OCI-LY7 (cell line): ENCODE measurements at regions of chr12 and their contacts with region 1.

Region 1: DNA sequence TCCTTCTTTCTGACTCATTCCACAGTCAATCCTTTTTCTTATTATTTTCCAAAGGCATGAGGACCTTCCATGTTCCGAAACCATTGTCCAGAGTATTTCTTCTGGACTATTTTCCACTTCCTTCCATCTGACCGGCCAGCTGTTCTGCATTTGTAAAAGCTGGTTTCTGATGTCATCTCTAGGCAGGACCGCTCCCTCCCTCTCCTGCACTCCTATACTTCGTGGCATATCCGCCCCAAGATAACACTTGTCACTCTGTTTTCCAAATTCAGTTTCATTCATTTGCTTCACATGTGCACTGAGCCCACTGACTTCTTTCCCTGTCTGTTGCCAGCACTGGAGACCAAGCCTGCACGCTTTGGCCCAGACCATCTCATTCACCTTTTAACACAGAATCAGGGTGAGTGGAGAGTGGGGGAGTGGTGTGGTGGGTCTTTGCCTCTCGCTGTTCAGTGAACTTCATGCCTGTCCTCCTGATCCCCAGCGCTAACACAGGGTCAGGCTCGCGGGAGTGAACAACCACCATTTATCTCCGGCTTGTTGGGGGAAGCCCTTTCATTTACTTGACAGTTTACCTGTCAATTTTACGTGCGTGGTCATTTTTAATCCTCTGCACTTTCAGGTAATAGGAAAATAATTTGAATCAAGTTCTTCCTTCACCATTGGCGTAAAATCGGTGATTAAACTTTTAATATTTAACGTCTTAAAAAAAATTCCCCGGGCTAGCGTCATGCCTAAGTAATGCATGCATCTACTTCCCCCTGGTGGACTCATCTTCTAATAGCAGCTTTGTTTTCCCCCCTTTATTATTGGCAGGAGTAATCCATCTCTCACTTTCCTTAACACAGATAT is 52.5 kb downstream of the C12orf75 start:
- DNase-seq: peak; percentile 75
- H3K4me3 ChIP-seq: no peak overlapping the region
- H3K27ac ChIP-seq: no peak overlapping the region
- H3K4me1 ChIP-seq: peaks cover 9% of the 10 kb centered on the region
- CTCF ChIP-seq: peak; percentile 97

Region 2: DNA sequence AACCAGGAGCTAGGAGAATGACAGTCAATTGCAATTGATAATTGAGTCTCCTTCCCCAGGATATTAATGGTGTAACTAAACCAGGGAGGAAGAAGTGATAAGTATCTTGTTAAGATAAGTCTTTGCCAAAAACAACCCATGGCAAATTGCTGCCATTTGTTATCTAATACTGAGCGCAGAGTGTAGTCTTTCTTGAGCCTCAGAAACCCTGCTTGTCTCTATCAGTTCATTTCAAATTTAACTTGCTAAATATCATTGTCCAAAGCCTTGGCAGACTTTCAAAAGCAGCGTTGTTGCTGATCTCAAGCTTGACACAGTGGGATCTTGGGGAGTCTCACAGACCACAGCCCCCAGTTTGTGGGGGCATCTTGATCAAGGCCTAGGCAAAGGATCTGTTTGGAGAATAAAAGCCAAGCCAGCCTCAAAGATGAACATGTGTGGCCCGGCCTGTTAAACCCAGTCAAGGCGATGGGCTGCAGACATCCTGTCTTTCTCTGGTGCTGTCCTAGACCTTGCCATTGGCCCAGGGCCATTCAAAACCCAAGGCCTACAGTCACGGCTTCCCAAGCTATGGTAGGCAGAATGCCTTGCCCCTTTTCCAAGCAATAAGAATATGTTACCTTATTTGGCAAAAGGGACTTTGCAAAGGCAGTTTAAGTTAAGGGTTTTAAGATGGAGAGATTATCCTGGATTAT is 762.0 kb before region 1 on chr12:
- CTCF ChIA-PET with region 1: no interaction called
- POLR2A ChIA-PET with region 1: no interaction called
- intact Hi-C with region 1: no loop called
- DNase-seq: no peak
- H3K4me3 ChIP-seq: no peak overlapping the region
- H3K27ac ChIP-seq: no peak overlapping the region
- H3K4me1 ChIP-seq: peaks cover 16% of the 10 kb centered on the region
- CTCF ChIP-seq: no peak

Region 3: GRCh38 chr12:105171691-105172436 is 211.1 kb before region 1 on chr12:
- CTCF ChIA-PET with region 1: no interaction called
- POLR2A ChIA-PET with region 1: no interaction called
- intact Hi-C with region 1: loop called (anchors 5 kb)
- DNase-seq: no peak
- H3K4me3 ChIP-seq: no peak overlapping the region
- H3K27ac ChIP-seq: no peak overlapping the region
- H3K4me1 ChIP-seq: no peaks in the 10 kb centered on the region
- CTCF ChIP-seq: no peak

Region 4: DNA sequence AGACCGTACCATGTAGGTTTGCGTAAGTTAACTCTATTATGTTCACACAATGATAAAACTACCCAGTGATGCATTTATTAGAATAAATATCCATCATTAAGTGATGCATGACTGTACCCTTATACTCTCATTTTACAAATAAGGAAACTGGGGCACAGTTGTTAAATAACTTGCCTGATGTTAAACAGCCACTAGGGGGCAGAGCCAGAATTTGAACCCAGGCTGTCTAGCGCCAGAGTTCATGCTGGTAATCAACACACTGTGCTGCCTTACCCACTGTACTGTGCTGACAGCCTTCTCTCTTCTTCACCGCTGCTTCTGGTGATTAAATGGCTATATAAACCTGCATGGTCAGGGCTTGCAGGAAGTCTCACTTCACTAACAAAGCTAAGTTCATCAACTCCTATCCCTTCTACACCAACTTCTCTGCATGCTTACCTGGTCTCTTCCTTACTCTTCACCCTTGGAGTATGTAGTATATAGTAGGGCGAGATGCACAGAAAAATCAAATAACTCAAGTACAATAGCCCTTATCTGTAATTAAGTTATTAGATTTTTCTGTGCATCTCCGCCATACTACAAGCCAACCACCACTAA is 103.4 kb before region 1 on chr12:
- CTCF ChIA-PET with region 1: no interaction called
- POLR2A ChIA-PET with region 1: no interaction called
- intact Hi-C with region 1: loop called (anchors 1 kb)
- DNase-seq: peak; percentile 64
- H3K4me3 ChIP-seq: no peak overlapping the region
- H3K27ac ChIP-seq: no peak overlapping the region
- H3K4me1 ChIP-seq: peaks cover 9% of the 10 kb centered on the region
- CTCF ChIP-seq: peak; percentile 88

Region 5: GRCh38 chr12:105319691-105320209 is 63.2 kb before region 1 on chr12:
- CTCF ChIA-PET with region 1: interaction called, 7 read pairs
- POLR2A ChIA-PET with region 1: interaction called, 8 read pairs
- intact Hi-C with region 1: loop called (anchors 1 kb)
- DNase-seq: peak; percentile 73
- H3K4me3 ChIP-seq: no peak overlapping the region
- H3K27ac ChIP-seq: no peak overlapping the region
- H3K4me1 ChIP-seq: peaks cover 53% of the 10 kb centered on the region
- CTCF ChIP-seq: peak; percentile 69

Region 6: GRCh38 chr12:105721051-105721825 is 338.2 kb after region 1 on chr12:
- CTCF ChIA-PET with region 1: no interaction called
- POLR2A ChIA-PET with region 1: no interaction called
- intact Hi-C with region 1: no loop called
- DNase-seq: no peak
- H3K4me3 ChIP-seq: no peak overlapping the region
- H3K27ac ChIP-seq: no peak overlapping the region
- H3K4me1 ChIP-seq: no peaks in the 10 kb centered on the region
- CTCF ChIP-seq: no peak